Endothelial cell of umbilical vein (primary cell): ENCODE measurements at regions of chr6 and their contacts with region 1.

Region 1: DNA sequence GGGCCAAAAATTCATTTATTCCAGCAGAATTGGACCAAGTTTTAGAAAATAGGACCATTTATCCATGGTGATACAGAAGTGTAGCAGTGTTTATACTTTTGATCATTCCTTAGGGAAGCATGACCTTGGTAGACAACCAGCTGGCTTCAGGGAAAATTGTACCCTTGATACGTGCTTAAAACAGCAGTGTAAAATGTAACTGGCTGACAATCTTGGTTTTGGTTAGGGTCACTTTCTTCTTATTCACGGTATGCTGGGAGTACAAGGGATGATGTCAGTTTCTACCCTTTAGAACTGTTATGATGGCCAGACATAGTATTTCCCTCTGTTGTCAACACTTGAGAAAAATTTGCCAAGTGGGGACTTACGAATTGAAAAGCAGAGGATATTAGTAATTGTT is 157.1 kb downstream of the BCKDHB start:
- DNase-seq: no peak
- H3K4me3 ChIP-seq: no peak overlapping the region
- H3K27ac ChIP-seq: no peak overlapping the region
- H3K4me1 ChIP-seq: no peaks in the 10 kb centered on the region
- H3K27me3 ChIP-seq: no peaks in the 10 kb centered on the region
- CTCF ChIP-seq: no peak
- POLR2A ChIP-seq: no peak

Region 2: DNA sequence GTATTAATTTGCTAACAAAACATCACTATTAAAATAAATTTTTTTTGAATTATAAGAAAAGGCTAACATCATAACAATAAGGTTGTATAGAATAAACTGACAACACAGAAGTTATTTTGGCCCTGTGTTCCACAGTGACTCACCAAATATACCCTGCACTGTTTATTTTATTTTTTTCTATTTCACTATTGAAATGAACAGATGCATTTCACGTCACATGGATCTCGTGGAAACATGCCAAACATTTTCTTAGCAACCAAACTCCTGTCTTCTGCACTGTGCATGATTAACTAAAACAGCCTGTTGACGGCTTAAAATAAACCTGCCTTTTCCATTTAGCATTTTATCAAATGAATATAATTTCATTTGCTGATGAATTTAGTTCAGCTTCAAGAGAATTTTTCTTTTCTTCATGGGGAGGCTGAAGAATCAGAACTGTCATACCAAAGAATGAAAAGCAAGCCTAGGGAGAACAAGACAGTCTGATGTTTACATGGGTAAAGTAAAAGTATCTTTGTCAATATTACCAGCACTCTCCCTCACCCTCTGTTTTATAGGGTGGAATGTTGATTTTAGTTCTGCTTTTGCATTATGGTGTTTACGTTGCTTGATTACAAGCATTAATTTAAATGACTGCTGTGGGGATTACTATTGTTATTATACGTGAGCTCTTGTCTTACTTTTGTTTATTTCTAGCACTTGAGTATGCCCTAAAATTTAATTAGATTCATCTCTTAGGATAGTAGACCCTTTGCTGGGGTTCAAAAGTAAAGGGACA is 841.7 kb before region 1 on chr6:
- CTCF ChIA-PET with region 1: no interaction called
- POLR2A ChIA-PET with region 1: no interaction called
- dilution Hi-C with region 1: no loop called
- intact Hi-C with region 1: no loop called
- DNase-seq: peak; percentile 99
- H3K4me3 ChIP-seq: no peak overlapping the region
- H3K27ac ChIP-seq: peak overlapping the region; percentile 24
- H3K4me1 ChIP-seq: peaks cover 17% of the 10 kb centered on the region
- H3K27me3 ChIP-seq: no peaks in the 10 kb centered on the region
- CTCF ChIP-seq: no peak
- POLR2A ChIP-seq: no peak

Region 3: GRCh38 chr6:80316686-80317231 is 53.2 kb after region 1 on chr6:
- CTCF ChIA-PET with region 1: no interaction called
- POLR2A ChIA-PET with region 1: interaction called, 13 read pairs
- dilution Hi-C with region 1: no loop called
- intact Hi-C with region 1: no loop called
- DNase-seq: peak; percentile 32
- H3K4me3 ChIP-seq: no peak overlapping the region
- H3K27ac ChIP-seq: no peak overlapping the region
- H3K4me1 ChIP-seq: no peaks in the 10 kb centered on the region
- H3K27me3 ChIP-seq: no peaks in the 10 kb centered on the region
- CTCF ChIP-seq: no peak
- POLR2A ChIP-seq: no peak